ENCODE measurements at regions of chr21 and their contacts with region 1.

Region 1: GRCh38 chr21:45427331-45428271 is 22.6 kb downstream of the COL18A1 start:
- DNase-seq: peak; percentile 75 to 91
- H3K4me3 ChIP-seq: no peak overlapping the region
- H3K27ac ChIP-seq: no peak overlapping the region
- H3K4me1 ChIP-seq: peaks cover 12% of the 10 kb centered on the region
- H3K27me3 ChIP-seq: no peaks in the 10 kb centered on the region
- CTCF ChIP-seq: no peak

Region 2: GRCh38 chr21:45319461-45320211 is 108.0 kb before region 1 on chr21:
- CTCF ChIA-PET with region 1: interaction called, 3 read pairs
- POLR2A ChIA-PET with region 1: no interaction called
- intact Hi-C with region 1: loop called (anchors 5 kb)
- DNase-seq: peak in 1 of 2 experiments; percentile 61
- H3K4me3 ChIP-seq: no peak overlapping the region
- H3K27ac ChIP-seq: peak overlapping the region; percentile 53; the same call in 1 of the 2 replicates
- H3K4me1 ChIP-seq: peaks cover 26% of the 10 kb centered on the region
- H3K27me3 ChIP-seq: no peaks in the 10 kb centered on the region
- CTCF ChIP-seq: no peak

Region 3: GRCh38 chr21:45330075-45330781 is 97.4 kb before region 1 on chr21:
- CTCF ChIA-PET with region 1: no interaction called
- POLR2A ChIA-PET with region 1: no interaction called
- intact Hi-C with region 1: no loop called
- DNase-seq: peak; percentile 67 to 82
- H3K4me3 ChIP-seq: no peak overlapping the region; the same call in 1 of the 2 replicates
- H3K27ac ChIP-seq: peak overlapping the region; percentile 41
- H3K4me1 ChIP-seq: peaks cover 19% of the 10 kb centered on the region
- H3K27me3 ChIP-seq: no peaks in the 10 kb centered on the region
- CTCF ChIP-seq: no peak